H1 (cell line): ENCODE measurements at regions of chr7 and their contacts with region 1.

Region 1: GRCh38 chr7:30630986-30631385 is 36.3 kb downstream of the GARS1 start:
- DNase-seq: no peak
- H3K4me3 ChIP-seq: no peak overlapping the region
- H3K27ac ChIP-seq: no peak overlapping the region
- H3K4me1 ChIP-seq: no peaks in the 10 kb centered on the region
- H3K27me3 ChIP-seq: no peaks in the 10 kb centered on the region
- CTCF ChIP-seq: no peak
- EP300 ChIP-seq: no peak
- POLR2A ChIP-seq: no peak
- RAD21 ChIP-seq: no peak

Region 2: GRCh38 chr7:30612658-30613265 is 18.2 kb before region 1 on chr7:
- CTCF ChIA-PET with region 1: interaction called, 9 read pairs
- POLR2A ChIA-PET with region 1: interaction called, 217 read pairs
- DNase-seq: no peak
- H3K4me3 ChIP-seq: no peak overlapping the region
- H3K27ac ChIP-seq: no peak overlapping the region
- H3K4me1 ChIP-seq: no peaks in the 10 kb centered on the region
- H3K27me3 ChIP-seq: no peaks in the 10 kb centered on the region
- CTCF ChIP-seq: no peak
- EP300 ChIP-seq: no peak
- POLR2A ChIP-seq: 0 out of 3 replicates have a peak, but pooled peaks of 1 of the 2 experiments have one; percentile 22
- RAD21 ChIP-seq: no peak

Region 3: DNA sequence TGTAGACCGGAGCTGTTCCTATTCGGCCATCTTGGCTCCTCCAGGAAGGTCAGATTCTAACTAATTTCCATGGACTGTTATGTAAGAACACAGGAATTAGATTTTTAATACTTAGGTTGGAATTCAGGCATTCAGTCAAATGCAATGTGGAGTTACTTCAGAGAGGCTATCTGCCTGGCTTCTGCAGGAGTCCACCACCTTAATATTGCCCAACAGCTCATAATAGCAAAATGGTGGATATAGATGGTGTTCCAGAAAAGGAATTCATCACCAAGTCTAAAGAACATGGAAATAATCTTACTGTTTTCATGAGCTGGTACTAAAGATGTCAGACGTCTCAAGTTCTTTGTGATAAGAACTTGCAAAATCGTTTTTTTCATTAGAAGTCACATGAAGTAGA is 11.8 kb after region 1 on chr7:
- CTCF ChIA-PET with region 1: no interaction called
- POLR2A ChIA-PET with region 1: interaction called, 12 read pairs
- DNase-seq: no peak
- H3K4me3 ChIP-seq: peak overlapping the region; percentile 38 to 60 (median 47)
- H3K27ac ChIP-seq: peak overlapping the region; percentile 69
- H3K4me1 ChIP-seq: peaks cover 2 to 5% (median 4%) of the 10 kb centered on the region in 4 experiments; a peak in 4 of 7 replicates
- H3K27me3 ChIP-seq: no peaks in the 10 kb centered on the region
- CTCF ChIP-seq: no peak
- EP300 ChIP-seq: no peak
- POLR2A ChIP-seq: no peak
- RAD21 ChIP-seq: no peak